Stomach (tissue), 19 donors: ENCODE measurements at regions of chr12 and their contacts with region 1.

Region 1: GRCh38 chr12:116599285-116600136 is 40.3 kb downstream of the MAP1LC3B2 start:
- DNase-seq: peak; percentile 82 to 91
- H3K4me3 ChIP-seq: peak overlapping the region; percentile 24 to 37 (median 28)
- H3K27ac ChIP-seq: peak overlapping the region; percentile 28 to 84 (median 80)
- H3K4me1 ChIP-seq: peaks cover 9 to 33% (median 26%) of the 10 kb centered on the region in 4 donors
- H3K27me3 ChIP-seq: no peaks in the 10 kb centered on the region
- CTCF ChIP-seq: peak in 4 of 7 experiments; percentile 31 to 75 (median 61)
- EP300 ChIP-seq: no peak
- POLR2A ChIP-seq: no peak

Region 2: GRCh38 chr12:115998119-115998633 is 601.3 kb before region 1 on chr12:
- intact Hi-C with region 1: loop called (anchors 10 kb)
- DNase-seq: peak in 1 of 2 donors; percentile 75
- H3K4me3 ChIP-seq: no peak overlapping the region
- H3K27ac ChIP-seq: peak overlapping the region; percentile 4 to 67 (median 38)
- H3K4me1 ChIP-seq: peaks cover 0 to 30% (median 19%) of the 10 kb centered on the region in 4 donors
- H3K27me3 ChIP-seq: no peaks in the 10 kb centered on the region
- CTCF ChIP-seq: peak in 5 of 7 experiments; percentile 20 to 94 (median 67)
- EP300 ChIP-seq: no peak
- POLR2A ChIP-seq: no peak

Region 3: DNA sequence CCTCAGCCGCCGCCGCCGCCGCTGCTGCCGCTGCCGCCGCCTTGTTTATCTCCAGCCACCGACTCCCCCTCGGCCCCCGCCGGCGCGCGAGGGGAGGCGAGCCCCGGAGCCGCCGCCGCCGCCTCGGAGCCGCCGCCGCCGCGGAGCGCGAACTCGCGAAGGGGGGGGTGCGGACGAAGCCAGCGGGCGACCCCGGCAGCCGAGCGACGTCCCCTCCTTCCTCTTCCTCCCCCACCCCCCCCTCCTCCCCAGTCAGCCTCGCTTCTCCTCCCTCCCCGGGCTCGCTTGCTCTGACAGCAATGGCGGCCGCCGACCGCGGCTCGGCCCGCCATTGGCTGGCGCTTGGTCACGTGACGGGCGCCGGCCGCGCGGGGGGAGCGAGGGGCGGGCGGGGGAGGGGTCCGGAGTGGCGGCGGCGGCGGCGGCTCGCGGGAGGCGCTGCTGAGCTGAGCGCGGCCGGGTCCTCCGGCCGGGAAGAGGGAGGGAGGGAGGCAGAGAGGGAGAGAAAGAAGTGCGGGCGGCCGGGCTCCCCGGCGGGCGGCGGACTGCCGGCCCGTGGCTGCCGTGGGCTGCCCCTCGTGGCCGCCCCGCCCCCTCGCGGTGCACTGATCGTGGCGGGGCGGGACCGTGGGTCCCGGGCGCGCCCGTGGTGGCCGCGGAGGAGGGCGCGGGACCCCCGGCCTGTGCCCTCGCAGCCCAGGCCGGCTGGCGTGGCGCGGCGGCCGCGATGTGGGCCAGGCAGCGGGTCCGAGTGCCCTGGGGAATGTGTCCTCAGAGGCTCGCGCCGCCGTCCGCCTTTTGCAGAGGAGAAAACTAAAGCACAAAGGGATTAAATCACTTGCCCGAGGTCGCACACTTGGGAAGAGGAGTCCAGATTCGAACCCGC is 321.9 kb before region 1 on chr12 and contains the start of gene MED13L:
- intact Hi-C with region 1: loop called (anchors 5 kb)
- DNase-seq: peak; percentile 91 to 97
- H3K4me3 ChIP-seq: peak within 1 kb of the TSS; percentile 67 to 85 (median 78)
- H3K27ac ChIP-seq: peak within 1 kb of the TSS; percentile 92 to 100 (median 99)
- H3K4me1 ChIP-seq: peaks cover 10 to 50% (median 32%) of the 10 kb centered on the region in 4 donors
- H3K27me3 ChIP-seq: no peaks in the 10 kb centered on the region
- CTCF ChIP-seq: peak in 3 of 7 experiments; percentile 15 to 67 (median 35)
- EP300 ChIP-seq: no peak
- POLR2A ChIP-seq: no peak
- total RNA-seq, gene MED13L: 56.2 to 305 (median 122) TPM